ENCODE measurements at regions of chr17 and their contacts with region 1.

Region 1: GRCh38 chr17:78840725-78841611 is at the start of gene USP36:
- DNase-seq: peak; percentile 98 to 100 (median 99)
- ATAC-seq: peak; percentile 91
- H3K4me3 ChIP-seq: peak within 1 kb of the TSS; percentile 80
- H3K4me3 Mint-ChIP-seq: peak within 1 kb of the TSS; percentile 90 to 97 (median 95)
- H3K27ac ChIP-seq: peak within 1 kb of the TSS; percentile 99
- H3K27ac Mint-ChIP-seq: peak within 1 kb of the TSS; percentile 90 to 100 (median 98)
- H3K4me1 ChIP-seq: peaks cover 18 to 31% of the 10 kb centered on the region in 2 donors
- H3K4me1 Mint-ChIP-seq: peaks cover 38 to 60% (median 49%) of the 10 kb centered on the region in 7 donors
- H3K27me3 ChIP-seq: no peaks in the 10 kb centered on the region
- H3K27me3 Mint-ChIP-seq: no peaks in the 10 kb centered on the region
- total RNA-seq, gene USP36: 107 to 414 (median 154) TPM

Region 2: GRCh38 chr17:78442648-78443128 is 398.3 kb before region 1 on chr17:
- CTCF ChIA-PET with region 1: interaction called, 4 read pairs
- POLR2A ChIA-PET with region 1: interaction called, 4 read pairs
- intact Hi-C with region 1: loop called in 1 of 2 experiments (anchors 1 kb)
- DNase-seq: no peak
- ATAC-seq: peak; percentile 89
- H3K4me3 ChIP-seq: no peak overlapping the region
- H3K4me3 Mint-ChIP-seq: no peak overlapping the region
- H3K27ac ChIP-seq: no peak overlapping the region
- H3K27ac Mint-ChIP-seq: no peak overlapping the region
- H3K4me1 ChIP-seq: no peaks in the 10 kb centered on the region
- H3K4me1 Mint-ChIP-seq: peaks cover 0 to 5% (median 0%) of the 10 kb centered on the region in 7 donors
- H3K27me3 ChIP-seq: no peaks in the 10 kb centered on the region
- H3K27me3 Mint-ChIP-seq: peaks cover 0 to 3% (median 0%) of the 10 kb centered on the region in 5 donors

Region 3: GRCh38 chr17:78665952-78666920 is 174.7 kb before region 1 on chr17:
- CTCF ChIA-PET with region 1: interaction called, 3 read pairs
- POLR2A ChIA-PET with region 1: no interaction called
- intact Hi-C with region 1: loop called in 1 of 2 experiments (anchors 2 kb)
- DNase-seq: peak in 8 of 9 donors; percentile 41 to 70 (median 61)
- ATAC-seq: peak; percentile 81
- H3K4me3 ChIP-seq: peak overlapping the region; percentile 2
- H3K4me3 Mint-ChIP-seq: peak overlapping the region; percentile 58 to 80 (median 72)
- H3K27ac ChIP-seq: peak overlapping the region; percentile 5
- H3K27ac Mint-ChIP-seq: peak overlapping the region; percentile 62 to 92 (median 86)
- H3K4me1 ChIP-seq: peaks cover 17 to 22% of the 10 kb centered on the region in 2 donors
- H3K4me1 Mint-ChIP-seq: peaks cover 35 to 49% (median 39%) of the 10 kb centered on the region in 7 donors
- H3K27me3 ChIP-seq: no peaks in the 10 kb centered on the region
- H3K27me3 Mint-ChIP-seq: no peaks in the 10 kb centered on the region

Region 4: DNA sequence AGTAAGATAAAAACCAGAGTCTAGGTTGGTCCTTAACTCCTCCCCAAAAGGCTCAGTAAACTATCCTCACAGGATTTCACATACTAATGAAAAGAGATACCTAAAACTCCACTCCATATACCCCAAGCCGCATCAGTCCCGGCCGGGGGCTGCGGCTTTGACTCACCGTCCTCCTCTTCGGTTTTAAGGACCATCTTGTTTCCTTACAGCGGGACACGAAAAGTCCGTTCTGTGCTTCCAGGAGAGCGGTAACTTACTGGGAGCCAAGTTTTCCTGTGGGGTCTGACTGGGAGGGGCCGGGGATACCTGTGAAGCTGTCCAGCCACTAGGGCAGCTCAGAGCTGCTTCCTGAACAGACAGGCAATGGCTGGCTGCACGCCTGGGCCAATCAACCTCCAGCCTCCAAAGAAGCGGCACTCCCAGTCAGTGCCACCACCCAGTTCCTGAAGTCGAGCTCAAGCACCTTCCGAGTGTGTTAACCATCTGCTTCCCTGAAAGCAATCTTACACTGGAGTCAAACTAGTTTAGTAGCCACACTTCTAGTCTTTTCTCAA is 104.4 kb before region 1 on chr17:
- CTCF ChIA-PET with region 1: no interaction called
- POLR2A ChIA-PET with region 1: interaction called, 5 read pairs
- intact Hi-C with region 1: loop called in 1 of 2 experiments (anchors 1 kb)
- DNase-seq: peak; percentile 45 to 82 (median 78)
- ATAC-seq: peak; percentile 91
- H3K4me3 ChIP-seq: peak overlapping the region; percentile 75
- H3K4me3 Mint-ChIP-seq: peak overlapping the region; percentile 90 to 97 (median 94)
- H3K27ac ChIP-seq: peak overlapping the region; percentile 79
- H3K27ac Mint-ChIP-seq: peak overlapping the region; percentile 88 to 95 (median 92)
- H3K4me1 ChIP-seq: peaks cover 71 to 80% of the 10 kb centered on the region in 2 donors
- H3K4me1 Mint-ChIP-seq: peaks cover 78 to 97% (median 88%) of the 10 kb centered on the region in 7 donors
- H3K27me3 ChIP-seq: no peaks in the 10 kb centered on the region
- H3K27me3 Mint-ChIP-seq: no peaks in the 10 kb centered on the region

Region 5: GRCh38 chr17:78781948-78782916 is 58.7 kb before region 1 on chr17 and contains the start of gene CYTH1:
- CTCF ChIA-PET with region 1: no interaction called
- POLR2A ChIA-PET with region 1: interaction called, 3 read pairs
- intact Hi-C with region 1: loop called (anchors 1 kb)
- DNase-seq: peak; percentile 94 to 100 (median 96)
- ATAC-seq: peak; percentile 92
- H3K4me3 ChIP-seq: peak within 1 kb of the TSS; percentile 96
- H3K4me3 Mint-ChIP-seq: peak within 1 kb of the TSS; percentile 88 to 99 (median 94)
- H3K27ac ChIP-seq: peak within 1 kb of the TSS; percentile 95
- H3K27ac Mint-ChIP-seq: peak within 1 kb of the TSS; percentile 91 to 99 (median 96)
- H3K4me1 ChIP-seq: peaks cover 51 to 53% of the 10 kb centered on the region in 2 donors
- H3K4me1 Mint-ChIP-seq: peaks cover 25 to 64% (median 58%) of the 10 kb centered on the region in 7 donors
- H3K27me3 ChIP-seq: no peaks in the 10 kb centered on the region
- H3K27me3 Mint-ChIP-seq: no peaks in the 10 kb centered on the region
- total RNA-seq, gene CYTH1: 297 to 452 (median 420) TPM

Region 6: DNA sequence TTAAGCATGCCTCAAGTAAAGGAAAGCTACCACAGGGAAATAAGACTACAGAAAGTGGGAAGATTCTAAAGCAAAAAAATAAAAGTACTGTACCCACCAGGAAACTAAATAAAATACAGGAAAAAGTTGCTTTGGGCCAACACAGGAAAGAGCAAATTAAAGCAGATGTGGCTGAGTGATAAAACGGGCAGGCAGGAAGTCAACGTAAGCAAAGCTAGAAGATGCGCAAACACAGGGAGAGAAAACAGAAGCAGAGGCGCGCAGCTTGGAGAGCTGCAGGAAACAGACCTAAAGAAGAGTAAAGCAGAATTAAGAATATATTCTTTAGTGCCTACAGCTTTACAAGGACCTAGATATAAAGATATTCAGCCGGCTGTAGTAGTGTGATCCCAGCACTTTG is 22.0 kb before region 1 on chr17:
- CTCF ChIA-PET with region 1: interaction called, 3 read pairs
- POLR2A ChIA-PET with region 1: interaction called, 5 read pairs
- intact Hi-C with region 1: loop called (anchors 1 kb)
- DNase-seq: peak in 7 of 9 donors; percentile 76 to 89 (median 86)
- ATAC-seq: peak; percentile 72
- H3K4me3 ChIP-seq: peak overlapping the region; percentile 37
- H3K4me3 Mint-ChIP-seq: peak overlapping the region; percentile 68 to 85 (median 78)
- H3K27ac ChIP-seq: peak overlapping the region; percentile 88
- H3K27ac Mint-ChIP-seq: peak overlapping the region; percentile 94 to 99 (median 96)
- H3K4me1 ChIP-seq: peaks cover 42 to 47% of the 10 kb centered on the region in 2 donors
- H3K4me1 Mint-ChIP-seq: peaks cover 36 to 76% (median 56%) of the 10 kb centered on the region in 7 donors
- H3K27me3 ChIP-seq: no peaks in the 10 kb centered on the region
- H3K27me3 Mint-ChIP-seq: no peaks in the 10 kb centered on the region

Region 7: DNA sequence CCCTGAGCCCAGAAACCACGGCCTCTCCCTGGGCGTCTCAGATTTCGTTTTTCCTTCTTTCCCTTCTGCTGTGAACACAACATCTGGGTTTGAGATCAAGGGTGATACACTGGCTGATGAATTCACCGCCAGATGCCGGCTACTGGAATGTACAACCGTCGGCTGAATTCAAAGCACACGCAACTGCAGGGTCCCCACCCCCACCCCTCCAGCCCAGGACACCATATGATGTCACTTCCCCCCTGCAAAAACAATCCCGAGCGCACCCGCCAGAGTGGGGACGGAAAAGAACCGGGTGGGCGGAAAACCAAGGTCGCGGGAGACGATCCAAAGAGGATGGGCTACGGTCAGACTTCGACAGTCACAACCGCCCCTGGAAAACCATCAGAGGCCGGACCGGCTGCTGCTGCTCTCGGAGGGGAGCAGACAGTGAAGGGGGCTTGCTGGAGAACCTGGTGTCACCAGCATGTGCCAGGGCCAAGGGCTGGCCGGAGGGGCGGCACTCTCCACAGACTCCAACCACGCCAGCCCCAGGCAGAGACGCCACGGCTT is 38.7 kb after region 1 on chr17:
- CTCF ChIA-PET with region 1: no interaction called
- POLR2A ChIA-PET with region 1: no interaction called
- intact Hi-C with region 1: no loop called
- DNase-seq: peak in 6 of 9 donors; percentile 25 to 43 (median 36)
- ATAC-seq: peak; percentile 29
- H3K4me3 ChIP-seq: peak overlapping the region; percentile 44
- H3K4me3 Mint-ChIP-seq: peak overlapping the region; percentile 66 to 87 (median 82)
- H3K27ac ChIP-seq: peak overlapping the region; percentile 32
- H3K27ac Mint-ChIP-seq: peak overlapping the region; percentile 67 to 94 (median 91)
- H3K4me1 ChIP-seq: peaks cover 0 to 19% of the 10 kb centered on the region in 2 donors
- H3K4me1 Mint-ChIP-seq: peaks cover 20 to 44% (median 37%) of the 10 kb centered on the region in 7 donors
- H3K27me3 ChIP-seq: no peaks in the 10 kb centered on the region
- H3K27me3 Mint-ChIP-seq: peaks cover 0 to 25% (median 0%) of the 10 kb centered on the region in 5 donors

Region 8: GRCh38 chr17:79009397-79010308 is 168.7 kb after region 1 on chr17 and contains the start of gene CANT1:
- CTCF ChIA-PET with region 1: no interaction called
- POLR2A ChIA-PET with region 1: no interaction called
- intact Hi-C with region 1: loop called in 1 of 2 experiments (anchors 1 kb)
- DNase-seq: peak; percentile 74 to 92 (median 85)
- ATAC-seq: peak; percentile 97
- H3K4me3 ChIP-seq: peak within 1 kb of the TSS; percentile 86
- H3K4me3 Mint-ChIP-seq: peak within 1 kb of the TSS; percentile 85 to 99 (median 92)
- H3K27ac ChIP-seq: peak within 1 kb of the TSS; percentile 86
- H3K27ac Mint-ChIP-seq: peak within 1 kb of the TSS; percentile 90 to 99 (median 96)
- H3K4me1 ChIP-seq: peaks cover 26 to 45% of the 10 kb centered on the region in 2 donors
- H3K4me1 Mint-ChIP-seq: peaks cover 31 to 59% (median 53%) of the 10 kb centered on the region in 7 donors
- H3K27me3 ChIP-seq: no peaks in the 10 kb centered on the region
- H3K27me3 Mint-ChIP-seq: peaks cover 0 to 21% (median 3%) of the 10 kb centered on the region in 5 donors
- total RNA-seq, gene CANT1: 40.1 to 82.2 (median 43.0) TPM

Measured in naive thymus-derived CD4-positive, alpha-beta T cell (primary cell).